ENCODE measurements at regions of chrX and their contacts with region 1.

Region 1: GRCh38 chrX:153609917-153610428 is 11.0 kb upstream of the CCNQ start:
- DNase-seq: no peak

Region 2: GRCh38 chrX:153488231-153488914 is 121.6 kb before region 1 on chrX:
- intact Hi-C with region 1: no loop called
- DNase-seq: no peak

Region 3: DNA sequence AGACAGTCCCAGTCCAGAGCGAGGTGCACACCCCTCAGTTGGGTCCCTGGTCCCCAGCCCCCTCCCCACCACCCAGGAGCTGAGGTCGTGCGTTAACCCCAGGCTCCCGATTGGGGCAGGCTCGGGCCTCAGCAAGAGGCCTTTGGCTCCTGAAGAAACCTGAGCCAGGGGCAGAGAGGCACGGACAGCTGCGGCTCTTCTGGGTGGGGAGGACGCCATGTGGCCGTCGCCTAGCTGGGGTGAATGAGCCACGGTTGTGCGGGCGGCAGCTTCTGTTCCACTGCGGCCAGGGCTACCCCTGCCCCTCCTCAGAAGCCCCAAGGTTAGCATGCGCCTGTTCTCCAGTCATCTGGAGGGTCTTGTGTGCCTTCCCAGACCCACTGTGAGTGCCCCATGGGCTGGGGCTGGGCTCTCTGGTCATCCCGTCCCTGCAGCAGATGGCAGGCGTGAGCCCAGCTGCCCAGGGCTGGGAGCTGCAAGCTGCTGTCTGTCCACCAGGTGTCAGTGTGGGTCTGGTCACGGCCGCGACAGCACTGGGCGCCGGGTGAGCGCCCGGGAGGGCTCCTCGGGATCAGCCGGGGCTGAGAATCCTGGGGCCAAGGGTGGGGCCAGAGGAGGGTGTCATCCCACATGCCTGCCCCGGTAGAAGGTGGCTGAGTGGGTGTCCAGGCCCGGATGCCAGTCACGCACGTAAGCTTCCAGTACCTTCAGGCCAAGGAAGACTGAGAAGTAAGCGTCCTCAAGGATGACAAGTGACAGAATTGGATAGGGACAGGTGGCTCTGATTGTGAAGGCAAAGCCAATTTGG is 70.6 kb before region 1 on chrX:
- intact Hi-C with region 1: no loop called
- DNase-seq: peak; percentile 86

Region 4: DNA sequence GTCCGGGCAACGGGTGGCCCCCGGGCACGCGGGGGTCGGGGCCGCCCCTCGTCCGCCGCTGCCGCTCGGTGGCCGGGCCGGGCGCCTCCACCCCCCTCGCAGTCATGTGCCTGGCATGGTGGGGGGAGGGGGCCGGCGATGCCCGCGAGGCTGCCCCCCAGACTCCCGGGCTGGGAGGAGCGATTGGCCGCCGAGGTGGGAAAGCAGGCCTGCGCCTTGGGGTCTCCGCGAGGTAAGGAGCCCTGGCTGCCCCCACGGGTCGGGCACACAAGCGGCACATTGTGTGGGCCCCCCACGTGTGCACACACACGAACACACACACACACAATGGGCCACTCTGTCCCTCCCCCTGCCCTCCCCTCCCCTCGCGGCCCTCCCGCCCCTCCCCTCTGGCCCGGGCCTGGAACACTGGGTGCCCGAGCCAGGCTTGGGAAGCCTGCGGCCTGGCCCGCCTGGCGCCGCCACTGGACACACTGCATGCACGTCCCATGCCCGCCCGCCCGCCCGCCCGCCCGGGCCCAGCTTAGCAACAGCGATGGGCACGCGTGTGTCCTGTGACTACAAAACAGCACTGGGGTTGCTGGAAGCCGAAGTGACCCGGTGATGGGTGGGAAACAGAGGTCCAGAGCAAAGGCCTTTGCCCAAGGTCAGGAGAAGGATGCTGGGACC is 79.1 kb after region 1 on chrX:
- intact Hi-C with region 1: no loop called
- DNase-seq: no peak

Region 5: GRCh38 chrX:153724252-153725040 is 114.5 kb after region 1 on chrX and contains the starts of genes ABCD1 and BCAP31:
- intact Hi-C with region 1: loop called (anchors 5 kb)
- DNase-seq: peak; percentile 94
- total RNA-seq, gene ABCD1: 15.1 TPM
- total RNA-seq, gene BCAP31: 98.0 TPM

Measured in cardiac septum (tissue), 1 donor.